ENCODE measurements at regions of chr6 and their contacts with region 1.

Region 1: GRCh38 chr6:134174672-134175198 is 122.3 kb upstream of the SLC2A12 start:
- DNase-seq: peak; percentile 97
- H3K4me3 Mint-ChIP-seq: peak overlapping the region; percentile 91
- H3K27ac Mint-ChIP-seq: peak overlapping the region; percentile 97
- H3K4me1 Mint-ChIP-seq: peaks cover 62% of the 10 kb centered on the region
- H3K27me3 Mint-ChIP-seq: no peaks in the 10 kb centered on the region

Region 2: GRCh38 chr6:134288538-134289203 is 113.9 kb after region 1 on chr6:
- intact Hi-C with region 1: loop called (anchors 1 kb)
- DNase-seq: peak; percentile 75
- H3K4me3 Mint-ChIP-seq: peak overlapping the region; percentile 74
- H3K27ac Mint-ChIP-seq: peak overlapping the region; percentile 96
- H3K4me1 Mint-ChIP-seq: peaks cover 20% of the 10 kb centered on the region
- H3K27me3 Mint-ChIP-seq: no peaks in the 10 kb centered on the region

Region 3: GRCh38 chr6:134436281-134436815 is 261.6 kb after region 1 on chr6:
- intact Hi-C with region 1: loop called (anchors 1 kb)
- DNase-seq: peak; percentile 90
- H3K4me3 Mint-ChIP-seq: peak overlapping the region; percentile 73
- H3K27ac Mint-ChIP-seq: peak overlapping the region; percentile 94
- H3K4me1 Mint-ChIP-seq: peaks cover 37% of the 10 kb centered on the region
- H3K27me3 Mint-ChIP-seq: no peaks in the 10 kb centered on the region

Region 4: GRCh38 chr6:134640975-134641429 is 466.3 kb after region 1 on chr6:
- intact Hi-C with region 1: loop called (anchors 1 kb)
- DNase-seq: peak; percentile 93
- H3K4me3 Mint-ChIP-seq: no peak overlapping the region
- H3K27ac Mint-ChIP-seq: no peak overlapping the region
- H3K4me1 Mint-ChIP-seq: peaks cover 26% of the 10 kb centered on the region
- H3K27me3 Mint-ChIP-seq: peaks cover 9% of the 10 kb centered on the region

Region 5: DNA sequence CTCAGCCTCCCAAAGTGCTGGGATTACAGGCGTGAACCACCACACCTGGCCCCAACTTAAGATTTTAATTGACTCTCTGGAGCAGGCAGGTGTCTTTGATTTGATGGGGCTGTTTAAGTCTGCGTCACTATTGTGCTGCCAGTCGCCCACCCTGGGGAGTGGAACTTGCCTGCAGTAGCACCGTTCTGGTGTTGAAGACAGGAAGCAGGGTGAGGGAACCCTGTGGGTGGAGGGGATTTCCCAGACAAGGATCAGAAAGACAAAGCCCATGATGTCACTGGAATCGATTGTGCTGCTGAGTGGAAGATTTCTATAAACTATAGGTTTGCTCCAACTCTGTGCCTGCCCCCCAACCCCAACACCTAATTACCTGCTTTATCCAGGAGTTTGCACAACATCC is 764.2 kb after region 1 on chr6:
- intact Hi-C with region 1: loop called (anchors 5 kb)
- DNase-seq: peak; percentile 80
- H3K4me3 Mint-ChIP-seq: peak overlapping the region; percentile 15
- H3K27ac Mint-ChIP-seq: no peak overlapping the region
- H3K4me1 Mint-ChIP-seq: peaks cover 23% of the 10 kb centered on the region
- H3K27me3 Mint-ChIP-seq: no peaks in the 10 kb centered on the region

Region 6: DNA sequence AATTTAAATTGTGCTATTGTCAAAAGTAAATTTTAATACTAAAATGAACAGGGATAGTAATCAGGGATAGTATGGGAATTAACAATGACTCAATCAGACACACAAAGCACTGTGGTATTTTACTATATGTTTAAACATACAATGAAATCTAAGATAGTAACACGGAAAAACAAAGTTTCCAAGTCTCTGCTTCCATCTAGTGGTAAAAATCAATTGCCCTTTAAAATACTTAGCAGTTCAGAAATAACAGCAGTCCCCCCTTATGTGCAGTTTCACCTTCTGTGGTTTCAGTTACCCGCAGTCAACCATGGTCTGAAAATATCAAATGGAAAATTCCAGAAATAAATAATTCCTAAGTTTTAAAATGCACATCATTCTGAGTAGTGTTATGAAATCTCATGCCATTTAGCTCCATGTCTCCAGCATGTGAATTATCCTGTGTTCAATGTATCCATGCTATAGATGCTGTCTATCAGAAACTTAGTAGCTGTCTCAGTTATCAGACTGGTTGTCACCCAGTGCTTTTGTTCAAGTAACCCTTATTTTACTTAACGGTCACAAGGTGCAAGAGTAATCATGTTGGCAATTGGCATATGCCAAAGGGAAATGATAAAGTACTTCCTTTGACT is 1264.3 kb after region 1 on chr6:
- intact Hi-C with region 1: loop called (anchors 10 kb)
- DNase-seq: peak; percentile 63
- H3K4me3 Mint-ChIP-seq: peak overlapping the region; percentile 69
- H3K27ac Mint-ChIP-seq: peak overlapping the region; percentile 51
- H3K4me1 Mint-ChIP-seq: peaks cover 19% of the 10 kb centered on the region
- H3K27me3 Mint-ChIP-seq: no peaks in the 10 kb centered on the region